Transverse colon (tissue), 4 donors: ENCODE measurements at regions of chr2 and their contacts with region 1.

Region 1: DNA sequence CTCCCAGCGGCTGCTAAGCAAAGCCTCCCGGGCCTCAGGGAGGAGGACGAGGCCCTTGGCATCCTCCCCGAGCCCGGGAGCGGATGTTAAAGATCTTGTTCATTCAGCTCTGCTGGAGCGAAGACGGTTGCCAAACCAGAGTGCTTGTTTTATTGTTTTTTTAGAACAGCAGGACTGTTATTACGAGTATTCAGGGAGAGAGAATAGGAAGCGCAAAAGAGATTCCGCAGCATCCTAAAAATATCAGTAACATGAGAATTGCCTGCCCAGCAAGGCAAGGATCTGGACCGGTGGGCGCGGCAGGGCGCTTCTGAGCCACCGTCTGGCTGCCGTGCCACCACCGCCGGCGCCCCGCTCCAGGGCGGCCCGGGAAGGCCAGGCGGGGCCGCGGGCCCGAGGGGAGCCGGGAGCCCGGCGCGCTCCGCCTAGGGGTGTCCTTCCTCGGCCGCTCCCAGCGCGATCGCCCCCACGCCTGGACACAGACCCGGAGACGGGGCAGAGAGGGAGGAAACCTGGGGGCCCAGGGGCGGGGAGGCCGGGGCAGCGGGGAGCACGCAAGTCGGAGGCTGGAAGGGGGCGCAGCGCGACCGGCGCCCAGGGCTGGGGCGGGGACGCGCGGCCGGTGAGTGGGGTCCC is 859 bp downstream of the CYS1 start:
- DNase-seq: no peak
- H3K4me3 ChIP-seq: peak overlapping the region; percentile 24 to 68 (median 50)
- H3K27ac ChIP-seq: peak overlapping the region; percentile 81 to 93 (median 86)
- H3K4me1 ChIP-seq: peaks cover 5 to 25% (median 15%) of the 10 kb centered on the region in 4 donors
- H3K27me3 ChIP-seq: peaks cover 96% of the 10 kb centered on the region
- CTCF ChIP-seq: peak in 1 of 5 experiments; percentile 4
- EP300 ChIP-seq: no peak
- POLR2A ChIP-seq: no peak

Region 2: DNA sequence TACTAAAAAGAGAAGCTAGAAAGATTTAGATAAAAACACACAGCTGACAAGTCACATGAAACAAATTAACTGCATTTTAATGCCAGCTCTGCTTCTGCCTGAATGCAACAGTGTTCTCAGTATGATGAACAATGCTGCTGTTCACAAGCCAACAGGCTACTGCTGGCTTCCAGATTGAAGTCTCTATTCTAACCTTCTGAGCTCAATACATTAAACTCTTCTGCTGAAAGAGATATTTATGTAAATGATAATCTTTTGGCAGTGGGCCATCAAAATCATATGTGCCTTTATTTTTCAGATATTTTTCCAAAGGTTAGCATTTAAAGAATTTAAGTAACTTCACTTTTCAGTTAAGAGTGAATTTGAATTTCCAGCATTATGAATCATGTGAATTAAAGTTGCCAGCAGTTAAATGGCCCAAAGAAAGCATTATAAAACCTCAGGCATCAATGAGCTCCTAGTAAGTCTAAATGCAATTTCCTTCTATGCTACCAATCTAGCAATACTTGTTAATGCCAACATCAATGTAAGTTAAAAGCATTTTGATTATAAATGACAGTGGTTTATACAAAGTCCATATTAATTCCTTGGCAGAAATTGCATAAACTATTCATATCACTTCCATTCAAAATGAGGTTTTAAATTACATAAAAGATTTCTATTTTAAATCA is 1325.1 kb before region 1 on chr2:
- in situ Hi-C with region 1: no loop called
- intact Hi-C with region 1: no loop called
- DNase-seq: no peak
- H3K4me3 ChIP-seq: no peak overlapping the region
- H3K27ac ChIP-seq: no peak overlapping the region
- H3K4me1 ChIP-seq: peaks cover 0 to 6% (median 0%) of the 10 kb centered on the region in 4 donors
- H3K27me3 ChIP-seq: no peaks in the 10 kb centered on the region
- CTCF ChIP-seq: no peak
- EP300 ChIP-seq: no peak
- POLR2A ChIP-seq: no peak

Region 3: DNA sequence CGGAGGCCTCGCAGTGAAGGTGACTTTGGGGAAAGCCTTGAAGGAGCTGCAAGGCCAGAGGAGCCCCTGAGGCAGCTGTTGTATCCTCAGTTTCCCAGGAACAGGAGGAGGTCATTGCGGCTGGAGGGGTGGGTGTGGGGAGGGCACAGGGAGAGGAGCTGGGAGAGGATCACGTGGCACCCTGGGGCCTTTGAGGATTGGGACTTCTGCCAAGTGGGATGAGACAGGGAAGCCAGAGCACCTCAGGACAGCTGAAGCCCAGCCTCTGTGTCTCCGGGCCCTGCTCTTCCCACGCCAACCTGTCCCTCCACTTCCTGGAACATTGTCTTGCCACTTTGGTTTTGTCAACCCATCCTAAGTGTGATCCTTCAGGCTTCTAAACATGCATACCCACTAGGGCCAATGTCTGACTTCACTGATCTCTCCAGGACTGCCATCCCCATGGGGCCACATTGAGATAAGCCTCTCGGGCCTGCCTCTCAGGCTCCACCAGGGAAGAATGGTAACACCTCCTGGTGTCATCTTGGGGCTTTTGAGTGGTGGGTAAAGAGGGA is 23.9 kb after region 1 on chr2:
- in situ Hi-C with region 1: no loop called
- intact Hi-C with region 1: loop called (anchors 1 kb)
- DNase-seq: no peak
- H3K4me3 ChIP-seq: no peak overlapping the region
- H3K27ac ChIP-seq: no peak overlapping the region
- H3K4me1 ChIP-seq: peaks cover 0 to 4% (median 0%) of the 10 kb centered on the region in 4 donors
- H3K27me3 ChIP-seq: no peaks in the 10 kb centered on the region
- CTCF ChIP-seq: no peak
- EP300 ChIP-seq: no peak
- POLR2A ChIP-seq: no peak

Region 4: GRCh38 chr2:10267551-10268465 is 188.5 kb after region 1 on chr2:
- in situ Hi-C with region 1: no loop called
- intact Hi-C with region 1: no loop called
- DNase-seq: peak; percentile 80
- H3K4me3 ChIP-seq: no peak overlapping the region
- H3K27ac ChIP-seq: peak overlapping the region; percentile 47 to 75 (median 58)
- H3K4me1 ChIP-seq: peaks cover 0 to 31% (median 16%) of the 10 kb centered on the region in 4 donors
- H3K27me3 ChIP-seq: no peaks in the 10 kb centered on the region
- CTCF ChIP-seq: no peak
- EP300 ChIP-seq: peak; percentile 28
- POLR2A ChIP-seq: no peak